ENCODE measurements at regions of chr3 and their contacts with region 1.

Region 1: GRCh38 chr3:44529927-44530326 is 25.1 kb upstream of the ZKSCAN7 start:
- DNase-seq: no peak
- ATAC-seq: no peak
- H3K4me3 ChIP-seq: no peak overlapping the region
- H3K27ac ChIP-seq: no peak overlapping the region
- H3K4me1 ChIP-seq: no peaks in the 10 kb centered on the region
- H3K27me3 ChIP-seq: no peaks in the 10 kb centered on the region

Region 2: GRCh38 chr3:43998836-43999727 is 530.8 kb before region 1 on chr3:
- intact Hi-C with region 1: no loop called
- DNase-seq: peak in 1 of 2 donors; percentile 74
- ATAC-seq: peak; percentile 28
- H3K4me3 ChIP-seq: peak overlapping the region; percentile 20 to 55
- H3K27ac ChIP-seq: no peak overlapping the region
- H3K4me1 ChIP-seq: no peaks in the 10 kb centered on the region
- H3K27me3 ChIP-seq: no peaks in the 10 kb centered on the region

Region 3: GRCh38 chr3:44501971-44502370 is 28.0 kb before region 1 on chr3:
- intact Hi-C with region 1: no loop called
- DNase-seq: no peak
- ATAC-seq: no peak
- H3K4me3 ChIP-seq: no peak overlapping the region
- H3K27ac ChIP-seq: no peak overlapping the region
- H3K4me1 ChIP-seq: no peaks in the 10 kb centered on the region
- H3K27me3 ChIP-seq: no peaks in the 10 kb centered on the region

Region 4: GRCh38 chr3:44624749-44625480 is 95.0 kb after region 1 on chr3 and contains the start of gene ZNF197:
- intact Hi-C with region 1: loop called in 1 of 2 experiments (anchors 10 kb)
- DNase-seq: peak; percentile 88 to 94
- ATAC-seq: peak; percentile 97
- H3K4me3 ChIP-seq: peak within 1 kb of the TSS; percentile 69 to 94
- H3K27ac ChIP-seq: peak within 1 kb of the TSS; percentile 38 to 66
- H3K4me1 ChIP-seq: peaks cover 1 to 3% of the 10 kb centered on the region in 2 donors
- H3K27me3 ChIP-seq: no peaks in the 10 kb centered on the region
- total RNA-seq, gene ZNF197: 15.2 to 20.3 TPM

Region 5: GRCh38 chr3:44913868-44914468 is 384.0 kb after region 1 on chr3:
- intact Hi-C with region 1: loop called (anchors 2 to 5 kb)
- DNase-seq: peak; percentile 72 to 88
- ATAC-seq: peak; percentile 65
- H3K4me3 ChIP-seq: no peak overlapping the region
- H3K27ac ChIP-seq: no peak overlapping the region
- H3K4me1 ChIP-seq: no peaks in the 10 kb centered on the region
- H3K27me3 ChIP-seq: no peaks in the 10 kb centered on the region